ENCODE measurements at regions of chr1 and their contacts with region 1.

Region 1: GRCh38 chr1:12067900-12068821 is 5.1 kb downstream of the TNFRSF8 start:
- DNase-seq: peak; percentile 83
- ATAC-seq: peak; percentile 69
- H3K4me3 Mint-ChIP-seq: peak overlapping the region; percentile 72
- H3K27ac Mint-ChIP-seq: peak overlapping the region; percentile 94
- H3K4me1 Mint-ChIP-seq: peaks cover 65% of the 10 kb centered on the region
- H3K27me3 Mint-ChIP-seq: peaks cover 22% of the 10 kb centered on the region

Region 2: GRCh38 chr1:12052008-12052573 is 16.1 kb before region 1 on chr1:
- CTCF ChIA-PET with region 1: interaction called, 50 read pairs
- DNase-seq: peak; percentile 88
- ATAC-seq: peak; percentile 67
- H3K4me3 Mint-ChIP-seq: peak overlapping the region; percentile 23
- H3K27ac Mint-ChIP-seq: peak overlapping the region; percentile 82
- H3K4me1 Mint-ChIP-seq: peaks cover 63% of the 10 kb centered on the region
- H3K27me3 Mint-ChIP-seq: no peaks in the 10 kb centered on the region

Region 3: GRCh38 chr1:12078938-12079861 is 11.0 kb after region 1 on chr1:
- CTCF ChIA-PET with region 1: interaction called, 39 read pairs
- DNase-seq: peak; percentile 71
- ATAC-seq: peak; percentile 57
- H3K4me3 Mint-ChIP-seq: no peak overlapping the region
- H3K27ac Mint-ChIP-seq: no peak overlapping the region
- H3K4me1 Mint-ChIP-seq: peaks cover 57% of the 10 kb centered on the region
- H3K27me3 Mint-ChIP-seq: peaks cover 6% of the 10 kb centered on the region

Region 4: GRCh38 chr1:12087797-12088314 is 19.7 kb after region 1 on chr1:
- CTCF ChIA-PET with region 1: interaction called, 17 read pairs
- DNase-seq: peak; percentile 80
- ATAC-seq: peak; percentile 71
- H3K4me3 Mint-ChIP-seq: peak overlapping the region; percentile 60
- H3K27ac Mint-ChIP-seq: peak overlapping the region; percentile 93
- H3K4me1 Mint-ChIP-seq: peaks cover 53% of the 10 kb centered on the region
- H3K27me3 Mint-ChIP-seq: no peaks in the 10 kb centered on the region